Aorta (tissue), 5 donors: ENCODE measurements at regions of chr18 and their contacts with region 1.

Region 1: DNA sequence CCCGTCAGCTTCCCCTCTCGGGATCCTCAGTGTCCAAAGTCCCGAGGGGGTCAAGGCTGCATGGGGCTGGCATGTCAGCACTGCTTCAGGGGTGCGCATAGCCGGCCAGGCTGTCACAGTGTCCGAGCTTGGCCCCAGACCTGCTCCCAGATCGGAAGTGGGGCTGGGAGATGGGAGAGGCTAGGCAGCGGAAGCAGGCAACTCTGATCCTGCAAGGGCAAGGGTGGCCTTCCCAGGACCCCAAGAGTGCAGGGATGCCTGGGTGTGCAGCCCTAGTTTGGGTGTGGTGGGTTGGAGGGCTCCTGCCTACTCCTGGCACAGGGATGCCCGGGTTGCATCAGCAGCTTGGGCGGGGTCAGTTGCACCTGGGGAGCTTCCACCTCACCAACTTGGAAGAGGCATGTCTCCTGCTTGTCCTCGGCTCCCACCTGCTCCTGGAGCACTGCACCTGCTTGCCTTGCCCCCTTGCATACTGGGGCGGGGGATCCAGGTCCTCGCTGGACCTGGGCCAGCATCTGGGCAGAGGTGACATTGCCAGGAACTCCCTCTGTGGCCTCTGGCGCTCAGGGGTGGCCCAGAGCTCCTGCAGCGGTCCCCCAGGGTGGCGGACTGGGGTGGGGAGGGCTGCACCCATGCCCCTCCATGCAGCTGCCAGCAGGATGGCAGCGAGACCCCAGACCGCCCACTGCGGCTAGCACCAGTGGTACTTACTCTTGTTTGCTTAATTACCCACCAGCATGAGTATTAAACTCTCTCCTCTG is 41.3 kb downstream of the CBLN2 start:
- DNase-seq: no peak
- ATAC-seq: peak; percentile 41
- H3K4me3 ChIP-seq: no peak overlapping the region
- H3K27ac ChIP-seq: no peak overlapping the region
- H3K4me1 ChIP-seq: no peaks in the 10 kb centered on the region
- H3K27me3 ChIP-seq: no peaks in the 10 kb centered on the region

Region 2: DNA sequence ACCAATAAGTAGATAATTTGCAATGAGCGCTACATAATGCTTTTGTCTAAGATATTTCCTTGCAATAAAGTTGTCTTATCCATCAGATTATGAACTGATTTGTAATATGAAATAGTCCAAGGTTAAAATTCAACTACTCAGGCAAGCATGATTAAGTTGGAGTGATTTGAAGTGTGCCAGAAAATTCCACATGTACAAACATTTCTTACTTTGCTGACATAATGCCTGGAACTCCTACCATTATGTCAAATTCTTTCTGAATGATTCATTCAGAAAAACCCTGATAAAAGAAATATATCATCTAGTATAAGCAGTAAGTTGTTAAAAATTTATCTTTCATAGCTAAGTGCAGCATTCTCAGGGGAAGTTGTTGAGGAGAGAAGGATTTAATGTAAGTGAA is 46.0 kb before region 1 on chr18:
- intact Hi-C with region 1: loop called in 1 of 2 experiments (anchors 10 kb)
- DNase-seq: no peak
- ATAC-seq: no peak
- H3K4me3 ChIP-seq: no peak overlapping the region
- H3K27ac ChIP-seq: no peak overlapping the region
- H3K4me1 ChIP-seq: no peaks in the 10 kb centered on the region
- H3K27me3 ChIP-seq: no peaks in the 10 kb centered on the region